ENCODE measurements at regions of chr1 and their contacts with region 1.

Region 1: DNA sequence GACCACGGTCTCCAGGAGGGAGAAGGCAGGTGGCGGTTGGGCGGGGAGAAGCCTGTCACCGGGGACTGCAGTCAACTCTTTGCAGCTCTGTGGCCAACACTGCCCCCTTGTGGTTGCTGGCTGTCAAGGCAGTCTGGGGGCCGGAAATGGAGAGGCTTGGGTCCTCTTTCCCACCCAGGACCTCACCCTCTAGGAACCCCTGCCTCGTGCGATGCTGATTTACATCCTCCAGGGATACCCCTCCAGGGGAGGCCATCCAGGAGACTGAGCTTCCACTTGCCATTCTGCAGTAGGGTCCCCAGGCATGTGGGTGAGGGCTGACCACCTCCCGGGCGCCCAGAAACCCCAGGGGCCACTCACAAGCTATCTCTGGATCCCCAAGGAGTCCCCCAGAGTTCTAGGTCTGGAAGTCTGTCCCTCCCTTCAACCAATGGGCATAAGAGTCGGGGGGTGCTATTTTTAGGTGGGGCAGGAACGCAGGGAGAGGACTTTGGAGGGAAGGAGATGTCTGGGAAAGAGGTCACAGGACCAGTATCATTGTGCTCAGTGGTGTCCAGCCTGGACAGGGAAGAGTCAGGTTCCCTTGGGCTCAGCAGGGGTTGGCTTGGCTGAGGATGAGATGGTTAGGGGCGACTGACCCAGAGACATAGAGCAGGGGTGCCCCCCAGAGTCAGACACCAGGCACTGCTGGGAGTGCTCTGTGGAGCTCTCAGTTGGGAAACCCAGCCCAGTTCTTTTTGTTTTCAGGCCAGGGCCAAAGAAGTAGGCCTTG is 7.1 kb upstream of the GPR61 start:
- DNase-seq: peak; percentile 73 to 85 (median 78)
- H3K4me3 ChIP-seq: peak overlapping the region in 5 of 7 experiments; percentile 9 to 71 (median 51)
- H3K27ac ChIP-seq: no peak overlapping the region
- H3K4me1 ChIP-seq: peaks cover 0 to 15% (median 5%) of the 10 kb centered on the region in 4 experiments
- H3K27me3 ChIP-seq: peaks cover 0 to 3% (median 0%) of the 10 kb centered on the region in 5 experiments

Region 2: GRCh38 chr1:109277434-109278204 is 254.9 kb before region 1 on chr1:
- CTCF ChIA-PET with region 1: interaction called, 16 read pairs
- POLR2A ChIA-PET with region 1: no interaction called
- DNase-seq: peak; percentile 62 to 70 (median 63)
- H3K4me3 ChIP-seq: no peak overlapping the region
- H3K27ac ChIP-seq: no peak overlapping the region
- H3K4me1 ChIP-seq: peaks cover 6 to 61% (median 22%) of the 10 kb centered on the region in 4 experiments
- H3K27me3 ChIP-seq: peaks cover 0 to 5% (median 0%) of the 10 kb centered on the region in 5 experiments

Region 3: GRCh38 chr1:109493805-109494539 is 38.6 kb before region 1 on chr1 and contains the start of gene CYB561D1:
- CTCF ChIA-PET with region 1: interaction called, 1,203 read pairs
- POLR2A ChIA-PET with region 1: interaction called, 3 read pairs
- DNase-seq: peak; percentile 84 to 92 (median 92)
- H3K4me3 ChIP-seq: peak within 1 kb of the TSS; percentile 89 to 99 (median 94)
- H3K27ac ChIP-seq: peak within 1 kb of the TSS in 1 of 2 experiments; percentile 52
- H3K4me1 ChIP-seq: peaks cover 0 to 16% (median 10%) of the 10 kb centered on the region in 4 experiments
- H3K27me3 ChIP-seq: no peaks in the 10 kb centered on the region

Region 4: GRCh38 chr1:109516872-109517271 is 15.7 kb before region 1 on chr1:
- CTCF ChIA-PET with region 1: interaction called, 1,203 read pairs
- POLR2A ChIA-PET with region 1: no interaction called
- DNase-seq: no peak
- H3K4me3 ChIP-seq: no peak overlapping the region
- H3K27ac ChIP-seq: no peak overlapping the region
- H3K4me1 ChIP-seq: no peaks in the 10 kb centered on the region
- H3K27me3 ChIP-seq: peaks cover 0 to 11% (median 0%) of the 10 kb centered on the region in 5 experiments

Region 5: GRCh38 chr1:109548321-109549267 is 16.0 kb after region 1 on chr1 and contains the start of gene GNAI3:
- CTCF ChIA-PET with region 1: interaction called, 110 read pairs
- POLR2A ChIA-PET with region 1: interaction called, 3 read pairs
- DNase-seq: peak; percentile 98 to 99 (median 99)
- H3K4me3 ChIP-seq: peak within 1 kb of the TSS; percentile 96 to 99 (median 98)
- H3K27ac ChIP-seq: peak within 1 kb of the TSS; percentile 95 to 98
- H3K4me1 ChIP-seq: peaks cover 21 to 35% (median 32%) of the 10 kb centered on the region in 4 experiments
- H3K27me3 ChIP-seq: no peaks in the 10 kb centered on the region

Region 6: DNA sequence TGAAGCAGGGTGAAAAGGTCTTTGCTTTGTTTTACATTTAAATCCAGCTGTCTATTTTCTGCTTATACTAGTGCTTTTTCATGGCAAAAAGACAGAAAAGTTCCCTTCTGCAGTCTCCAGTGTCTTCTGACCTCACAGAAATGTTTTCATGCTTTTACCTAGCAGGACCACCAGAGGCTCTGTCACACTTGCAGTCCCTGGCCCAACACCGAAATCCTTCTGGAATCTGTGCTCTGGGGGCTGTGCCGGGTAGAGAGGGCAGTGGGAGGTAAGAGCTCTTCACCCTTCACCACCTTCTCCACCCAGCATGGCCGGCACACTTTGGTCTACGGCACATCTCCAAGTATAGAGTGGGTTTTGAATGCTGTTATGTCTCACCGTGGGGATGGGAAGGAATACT is 66.1 kb after region 1 on chr1:
- CTCF ChIA-PET with region 1: no interaction called
- POLR2A ChIA-PET with region 1: no interaction called
- DNase-seq: peak in 2 of 3 donors; percentile 34 to 35
- H3K4me3 ChIP-seq: no peak overlapping the region
- H3K27ac ChIP-seq: no peak overlapping the region
- H3K4me1 ChIP-seq: peaks cover 0 to 3% (median 0%) of the 10 kb centered on the region in 4 experiments
- H3K27me3 ChIP-seq: no peaks in the 10 kb centered on the region